ENCODE measurements at regions of chr3 and their contacts with region 1.

Region 1: DNA sequence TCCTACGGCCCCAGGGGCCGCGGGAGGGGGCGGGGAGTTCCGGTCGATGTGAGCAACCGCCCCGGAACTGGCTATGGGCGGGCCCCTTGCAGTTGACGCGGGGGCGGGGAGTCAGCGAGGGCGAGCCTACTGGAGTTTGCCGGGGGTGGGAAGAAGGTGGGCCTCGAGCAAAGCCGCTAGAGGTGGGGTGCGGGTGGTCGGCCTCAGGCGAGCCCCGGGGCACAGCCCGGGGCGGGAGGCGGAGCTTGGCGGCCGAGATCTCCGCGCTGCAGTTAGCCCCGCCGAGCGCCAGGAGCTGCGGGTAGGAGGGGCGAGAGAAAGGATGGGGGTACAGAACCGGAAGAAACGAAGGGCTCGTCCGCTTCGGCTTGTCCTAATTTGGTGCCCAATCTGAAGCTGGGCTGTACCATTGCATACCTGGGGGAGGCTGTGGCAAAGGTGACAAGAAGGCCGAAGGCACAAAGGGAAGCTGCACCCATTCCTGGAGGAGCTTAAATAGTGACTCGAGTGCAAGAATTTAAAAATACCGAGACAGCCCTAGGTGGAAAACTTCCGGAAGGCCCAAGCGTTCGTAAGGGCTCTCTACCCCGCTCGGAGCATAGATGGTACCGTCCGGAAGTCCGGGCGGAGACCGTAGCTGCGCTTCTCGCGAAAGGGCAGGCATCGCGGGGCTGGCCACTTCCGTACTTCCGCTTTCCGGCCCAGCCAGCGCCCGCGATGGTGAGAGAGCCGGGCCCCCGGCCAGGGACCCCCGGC is at the starts of genes ARPC4 and TADA3:
- DNase-seq: peak; percentile 95
- ATAC-seq: peak; percentile 79
- H3K4me3 Mint-ChIP-seq: peak within 1 kb of the TSS; percentile 99
- H3K27ac Mint-ChIP-seq: peak within 1 kb of the TSS; percentile 100
- H3K4me1 Mint-ChIP-seq: peaks cover 73% of the 10 kb centered on the region
- H3K27me3 Mint-ChIP-seq: no peaks in the 10 kb centered on the region
- total RNA-seq, gene ARPC4: 164 to 231 TPM
- total RNA-seq, gene TADA3: 80.7 to 96.4 TPM

Region 2: GRCh38 chr3:9396700-9397521 is 395.7 kb before region 1 on chr3:
- CTCF ChIA-PET with region 1: no interaction called
- POLR2A ChIA-PET with region 1: interaction called, 5 read pairs
- intact Hi-C with region 1: loop called (anchors 1 to 5 kb)
- DNase-seq: peak; percentile 99
- ATAC-seq: peak; percentile 74
- H3K4me3 Mint-ChIP-seq: peak overlapping the region; percentile 93
- H3K27ac Mint-ChIP-seq: peak overlapping the region; percentile 98
- H3K4me1 Mint-ChIP-seq: peaks cover 63% of the 10 kb centered on the region
- H3K27me3 Mint-ChIP-seq: no peaks in the 10 kb centered on the region

Region 3: DNA sequence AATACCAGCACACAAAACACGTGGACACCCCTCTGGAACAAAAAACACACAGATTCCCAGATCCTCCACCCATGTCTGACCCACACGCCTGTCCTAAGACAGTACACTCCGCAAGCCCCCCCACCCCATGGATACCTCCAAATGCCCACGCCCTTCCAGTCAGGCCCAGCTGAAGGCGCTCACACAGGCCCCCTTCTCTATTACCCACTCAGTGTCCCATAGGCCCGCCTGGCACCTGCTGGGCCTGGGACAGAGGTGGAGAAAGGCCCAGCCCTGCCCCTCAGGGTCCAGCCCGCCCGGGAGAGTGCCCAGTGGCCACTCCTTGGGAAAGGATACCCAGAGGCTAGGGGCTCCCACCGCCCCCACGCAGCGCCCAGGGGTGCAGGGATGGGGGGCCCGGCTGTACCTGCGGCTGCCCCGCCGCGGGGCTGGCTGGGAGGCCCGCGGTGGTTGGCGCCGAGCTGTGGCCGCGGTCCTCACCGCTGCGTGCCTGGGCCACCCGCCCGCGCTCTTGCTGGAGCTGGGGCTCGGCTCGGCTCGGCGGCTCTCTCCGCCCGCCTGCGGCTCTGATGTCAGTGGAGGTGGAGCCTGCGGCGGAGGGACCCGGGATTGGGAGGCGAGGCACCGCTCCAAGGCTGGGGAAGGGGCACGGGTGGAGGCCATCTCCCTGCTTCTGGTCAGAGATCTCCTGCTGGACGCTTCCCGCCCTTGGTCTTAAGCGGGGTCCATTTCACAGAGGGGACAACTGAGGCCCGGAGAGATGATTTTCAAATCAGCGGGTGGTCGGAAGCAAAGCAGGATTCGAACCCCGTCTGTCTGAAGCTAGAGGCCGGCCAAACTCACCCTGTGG is 22.9 kb before region 1 on chr3 and contains the start of gene CAMK1:
- CTCF ChIA-PET with region 1: interaction called, 5 read pairs
- POLR2A ChIA-PET with region 1: interaction called, 6 read pairs
- intact Hi-C with region 1: loop called in 1 of 2 experiments (anchors 1 kb)
- DNase-seq: peak; percentile 88
- ATAC-seq: peak; percentile 97
- H3K4me3 Mint-ChIP-seq: peak within 1 kb of the TSS; percentile 79
- H3K27ac Mint-ChIP-seq: peak within 1 kb of the TSS; percentile 78
- H3K4me1 Mint-ChIP-seq: peaks cover 21% of the 10 kb centered on the region
- H3K27me3 Mint-ChIP-seq: no peaks in the 10 kb centered on the region
- total RNA-seq, gene CAMK1: 48.4 to 53.1 TPM

Region 4: DNA sequence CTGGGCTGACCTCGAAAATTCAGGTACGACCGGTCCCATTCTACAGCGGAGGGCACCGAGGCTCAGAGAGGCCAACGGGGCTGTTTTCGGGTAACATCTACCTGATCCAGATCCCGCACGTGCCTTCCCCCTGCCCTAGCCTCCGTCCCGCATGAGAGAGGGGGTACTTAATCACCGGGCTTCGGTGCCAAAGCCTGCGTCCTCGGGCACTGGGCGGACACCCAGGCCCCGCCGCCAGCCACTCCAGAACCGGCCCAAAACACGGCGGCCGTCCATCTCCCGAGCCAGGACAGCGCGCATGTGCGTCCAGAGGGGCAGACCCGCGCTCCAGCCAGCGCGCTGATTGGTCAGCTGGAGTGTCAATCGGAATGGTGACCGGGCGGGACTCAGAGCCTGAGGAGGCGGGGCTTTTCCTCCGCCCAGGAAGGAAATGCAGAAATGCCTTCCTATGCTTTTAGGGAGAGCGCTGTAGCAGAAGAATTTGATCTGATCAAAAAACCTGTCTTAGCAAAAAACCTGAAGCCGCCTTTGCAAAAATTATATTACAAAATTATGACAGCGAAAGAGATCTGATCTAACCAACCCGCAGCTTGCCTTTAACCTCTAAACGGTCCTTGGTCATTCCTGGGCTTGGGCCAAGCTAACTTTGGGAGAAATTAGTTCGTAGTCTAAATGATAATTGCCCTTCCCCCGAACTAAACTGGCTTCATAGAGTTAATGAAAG is 51.3 kb after region 1 on chr3 and contains the start of gene RPUSD3:
- CTCF ChIA-PET with region 1: no interaction called
- POLR2A ChIA-PET with region 1: no interaction called
- intact Hi-C with region 1: loop called in 1 of 2 experiments (anchors 1 kb)
- DNase-seq: peak; percentile 98
- ATAC-seq: peak; percentile 97
- H3K4me3 Mint-ChIP-seq: peak within 1 kb of the TSS; percentile 99
- H3K27ac Mint-ChIP-seq: peak within 1 kb of the TSS; percentile 96
- H3K4me1 Mint-ChIP-seq: peaks cover 28% of the 10 kb centered on the region
- H3K27me3 Mint-ChIP-seq: no peaks in the 10 kb centered on the region
- total RNA-seq, gene RPUSD3: 79.2 to 81.5 TPM

Region 5: GRCh38 chr3:10026084-10026890 is 233.7 kb after region 1 on chr3 and contains the start of gene FANCD2:
- CTCF ChIA-PET with region 1: no interaction called
- POLR2A ChIA-PET with region 1: no interaction called
- intact Hi-C with region 1: loop called in 1 of 2 experiments (anchors 1 kb)
- DNase-seq: peak; percentile 95
- ATAC-seq: peak; percentile 91
- H3K4me3 Mint-ChIP-seq: peak within 1 kb of the TSS; percentile 95
- H3K27ac Mint-ChIP-seq: peak within 1 kb of the TSS; percentile 99
- H3K4me1 Mint-ChIP-seq: peaks cover 25% of the 10 kb centered on the region
- H3K27me3 Mint-ChIP-seq: no peaks in the 10 kb centered on the region
- total RNA-seq, gene FANCD2: 86.4 to 87.7 TPM

Region 6: GRCh38 chr3:10322352-10322710 is 529.7 kb after region 1 on chr3:
- CTCF ChIA-PET with region 1: no interaction called
- POLR2A ChIA-PET with region 1: no interaction called
- intact Hi-C with region 1: loop called in 1 of 2 experiments (anchors 1 kb)
- DNase-seq: peak; percentile 37
- ATAC-seq: peak; percentile 22
- H3K4me3 Mint-ChIP-seq: no peak overlapping the region
- H3K27ac Mint-ChIP-seq: peak overlapping the region; percentile 3
- H3K4me1 Mint-ChIP-seq: peaks cover 23% of the 10 kb centered on the region
- H3K27me3 Mint-ChIP-seq: peaks cover 4% of the 10 kb centered on the region

Region 7: GRCh38 chr3:10389995-10390394 is 597.4 kb after region 1 on chr3:
- CTCF ChIA-PET with region 1: no interaction called
- POLR2A ChIA-PET with region 1: no interaction called
- intact Hi-C with region 1: no loop called
- DNase-seq: no peak
- ATAC-seq: no peak
- H3K4me3 Mint-ChIP-seq: no peak overlapping the region
- H3K27ac Mint-ChIP-seq: no peak overlapping the region
- H3K4me1 Mint-ChIP-seq: peaks cover 31% of the 10 kb centered on the region
- H3K27me3 Mint-ChIP-seq: no peaks in the 10 kb centered on the region

Measured in activated CD4-positive, alpha-beta T cell treated with anti-CD3 and anti-CD28 coated beads for 36 hours (primary cell).